Posterior vena cava (tissue), 2 donors: ENCODE measurements at regions of chr12 and their contacts with region 1.

Region 1: DNA sequence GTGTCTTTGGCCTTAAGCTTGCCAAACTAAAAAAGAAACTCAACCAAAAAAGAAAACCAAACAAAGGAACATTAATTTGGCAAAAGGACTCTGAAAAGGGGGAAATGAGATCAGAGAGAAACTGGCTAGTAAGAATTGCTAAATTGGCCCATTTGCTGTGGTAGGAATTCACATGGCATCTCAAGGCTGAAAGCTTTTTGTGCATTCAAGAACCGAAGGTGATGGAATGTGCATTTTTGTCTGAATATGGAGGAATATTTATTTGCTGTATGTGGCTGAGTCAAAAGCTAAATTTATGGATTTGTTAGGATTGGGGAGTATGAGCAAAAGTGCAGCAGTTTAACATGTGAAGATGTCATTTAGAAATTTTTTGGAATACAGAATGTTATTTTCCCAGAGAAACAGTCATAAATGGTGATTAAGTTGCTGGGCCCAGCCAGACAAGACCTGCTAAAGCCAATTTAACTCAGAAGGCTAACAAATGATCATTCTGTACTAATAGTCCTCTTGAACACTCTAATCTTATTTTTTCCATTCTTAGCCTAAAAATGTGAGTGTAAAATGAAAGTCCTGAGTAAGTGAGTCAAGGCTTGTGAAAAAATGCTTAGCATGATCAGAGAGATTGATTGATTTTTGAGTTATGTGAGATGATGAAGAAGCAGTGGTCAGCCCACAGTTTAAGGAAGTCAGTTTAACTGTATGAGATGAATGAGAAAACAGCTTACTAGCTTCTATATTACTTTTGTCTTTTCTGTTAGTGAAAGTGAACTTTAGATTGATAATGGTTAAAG is 94.1 kb downstream of the ANO6 start:
- DNase-seq: no peak

Region 2: GRCh38 chr12:45354399-45354798 is 44.4 kb after region 1 on chr12:
- intact Hi-C with region 1: loop called in 1 of 2 experiments (anchors 10 kb)
- DNase-seq: no peak